ENCODE measurements at regions of chr7 and their contacts with region 1.

Region 1: DNA sequence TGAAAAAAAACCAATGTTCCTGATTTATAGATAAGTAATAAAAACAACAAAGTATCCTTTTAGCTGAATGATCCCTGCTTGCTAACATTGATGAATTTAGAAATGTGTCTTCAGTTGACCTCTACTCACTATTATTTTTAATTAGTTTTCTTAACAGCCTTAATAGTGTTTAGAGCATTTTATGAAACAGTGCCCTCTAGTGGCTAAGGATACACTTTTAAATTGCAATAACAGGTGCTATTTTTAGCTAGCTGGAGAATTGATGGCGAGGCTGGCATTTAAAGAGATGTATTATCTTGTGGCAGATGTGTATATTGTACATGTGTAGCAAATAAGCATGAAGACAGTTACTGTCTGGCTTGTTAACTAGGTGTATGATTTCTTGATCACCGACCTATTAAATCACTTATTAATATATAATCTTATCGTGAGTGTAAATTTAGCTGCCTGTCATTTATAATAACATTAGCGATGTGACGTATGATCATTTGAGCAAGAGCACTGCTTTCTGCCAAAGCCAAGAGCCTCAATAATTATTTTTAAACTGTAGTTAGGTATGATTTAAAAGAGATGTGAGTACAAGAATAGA is 451.9 kb downstream of the DPP6 start:
- DNase-seq: peak; percentile 22 to 41
- ATAC-seq: peak in 1 of 2 experiments; percentile 48; a peak in 2 of 6 replicates
- H3K4me3 ChIP-seq: no peak overlapping the region
- H3K27ac ChIP-seq: no peak overlapping the region
- H3K4me1 ChIP-seq: no peaks in the 10 kb centered on the region
- CTCF ChIP-seq: peak; percentile 58
- EP300 ChIP-seq: no peak
- POLR2A ChIP-seq: no peak
- RAD21 ChIP-seq: peak; percentile 48 to 51; a peak in 2 of 5 replicates

Region 2: GRCh38 chr7:154353355-154353767 is 150.7 kb before region 1 on chr7:
- CTCF ChIA-PET with region 1: no interaction called
- POLR2A ChIA-PET with region 1: no interaction called
- DNase-seq: no peak
- ATAC-seq: no peak
- H3K4me3 ChIP-seq: no peak overlapping the region
- H3K27ac ChIP-seq: no peak overlapping the region
- H3K4me1 ChIP-seq: no peaks in the 10 kb centered on the region
- CTCF ChIP-seq: no peak
- EP300 ChIP-seq: no peak
- POLR2A ChIP-seq: no peak
- RAD21 ChIP-seq: no peak

Region 3: DNA sequence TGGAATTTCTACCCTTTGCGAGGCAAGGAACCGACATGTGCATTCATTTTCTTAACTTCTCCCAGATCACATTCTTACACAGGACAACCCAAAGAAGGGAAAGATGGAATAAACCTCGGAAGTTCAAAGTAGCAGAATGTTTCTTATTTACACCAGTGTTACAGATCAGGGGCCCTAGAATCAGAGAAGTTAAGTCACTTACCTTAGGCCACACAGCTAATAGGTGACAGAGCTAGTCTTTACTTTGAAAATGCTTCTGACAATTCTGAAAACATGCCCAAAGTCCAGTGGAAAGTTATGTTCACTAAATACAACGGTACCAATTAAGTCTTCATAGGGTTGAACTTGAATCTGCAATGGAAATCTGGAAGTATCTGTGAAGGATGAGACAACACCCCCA is 14.2 kb before region 1 on chr7:
- CTCF ChIA-PET with region 1: interaction called, 13 read pairs
- POLR2A ChIA-PET with region 1: no interaction called
- DNase-seq: no peak
- ATAC-seq: no peak
- H3K4me3 ChIP-seq: no peak overlapping the region
- H3K27ac ChIP-seq: no peak overlapping the region
- H3K4me1 ChIP-seq: no peaks in the 10 kb centered on the region
- CTCF ChIP-seq: no peak
- EP300 ChIP-seq: no peak
- POLR2A ChIP-seq: no peak
- RAD21 ChIP-seq: no peak

Measured in A549 (cell line).